ENCODE measurements at regions of chrX and their contacts with region 1.

Region 1: GRCh38 chrX:53317365-53318069 is 36.1 kb upstream of the IQSEC2 start:
- DNase-seq: peak; percentile 27
- H3K4me3 ChIP-seq: no peak overlapping the region
- H3K27ac ChIP-seq: no peak overlapping the region
- H3K4me1 ChIP-seq: peaks cover 13% of the 10 kb centered on the region
- H3K27me3 ChIP-seq: peaks cover 34% of the 10 kb centered on the region in 2 experiments
- CTCF ChIP-seq: peak; percentile 51 to 84
- POLR2A ChIP-seq: no peak

Region 2: GRCh38 chrX:53305219-53305995 is 12.1 kb before region 1 on chrX:
- CTCF ChIA-PET with region 1: interaction called, 10 read pairs
- POLR2A ChIA-PET with region 1: no interaction called
- dilution Hi-C with region 1: no loop called
- intact Hi-C with region 1: no loop called
- DNase-seq: no peak
- H3K4me3 ChIP-seq: no peak overlapping the region
- H3K27ac ChIP-seq: no peak overlapping the region
- H3K4me1 ChIP-seq: no peaks in the 10 kb centered on the region
- H3K27me3 ChIP-seq: no peaks in the 10 kb centered on the region
- CTCF ChIP-seq: no peak
- POLR2A ChIP-seq: no peak

Region 3: DNA sequence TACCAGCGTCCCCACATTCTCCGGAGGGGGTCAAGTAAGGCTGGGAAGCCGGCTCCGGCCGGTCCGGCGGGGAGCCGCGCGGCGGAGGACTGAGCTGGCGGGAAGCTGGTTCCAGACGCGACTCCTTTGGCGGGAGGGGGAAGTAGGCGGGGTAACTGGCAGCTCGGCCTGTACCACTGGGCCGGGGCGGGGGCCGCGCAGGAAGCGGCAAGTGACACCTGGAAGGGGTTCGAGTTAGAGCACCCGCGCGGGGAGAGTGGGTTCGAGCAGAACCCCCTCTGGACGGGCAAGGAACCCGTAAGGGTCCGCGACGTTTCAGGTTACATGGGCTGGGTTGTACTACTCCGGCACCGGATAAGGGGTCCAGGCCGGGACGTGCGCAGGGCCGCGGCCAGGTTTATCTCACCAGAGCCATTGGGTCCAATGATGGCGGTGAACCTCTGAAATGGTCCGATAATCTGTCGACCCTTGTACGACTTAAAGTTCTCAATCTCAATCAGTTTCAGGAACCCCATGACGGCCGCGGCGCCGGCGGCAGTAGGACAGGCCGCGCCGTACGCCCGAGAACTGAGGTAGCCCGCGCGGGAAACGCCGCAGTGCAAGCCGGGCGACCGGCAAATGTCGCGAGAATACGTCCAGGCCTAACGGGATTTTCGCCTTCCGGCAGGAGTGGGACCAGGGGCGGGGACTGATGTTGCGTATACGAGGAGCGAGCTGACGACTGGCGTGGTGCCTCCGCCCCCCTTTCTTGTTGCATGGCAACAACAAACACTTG is 104.8 kb after region 1 on chrX and contains the start of gene SMC1A:
- CTCF ChIA-PET with region 1: interaction called, 10 read pairs
- POLR2A ChIA-PET with region 1: no interaction called
- dilution Hi-C with region 1: no loop called
- intact Hi-C with region 1: no loop called
- DNase-seq: peak; percentile 96
- H3K4me3 ChIP-seq: peak within 1 kb of the TSS; percentile 66 to 81 (median 80)
- H3K27ac ChIP-seq: peak within 1 kb of the TSS; percentile 88
- H3K4me1 ChIP-seq: peaks cover 12% of the 10 kb centered on the region
- H3K27me3 ChIP-seq: no peaks in the 10 kb centered on the region
- CTCF ChIP-seq: no peak
- POLR2A ChIP-seq: peak; percentile 83
- total RNA-seq, gene SMC1A: 72.5 and 75.9 TPM in 2 replicates

Region 4: GRCh38 chrX:53441531-53442321 is 124.2 kb after region 1 on chrX:
- CTCF ChIA-PET with region 1: interaction called, 47 read pairs
- POLR2A ChIA-PET with region 1: no interaction called
- dilution Hi-C with region 1: no loop called
- intact Hi-C with region 1: loop called (anchors 1 kb)
- DNase-seq: peak; percentile 58
- H3K4me3 ChIP-seq: peak overlapping the region in 2 of 3 experiments; percentile 35 to 52
- H3K27ac ChIP-seq: no peak overlapping the region
- H3K4me1 ChIP-seq: peaks cover 7% of the 10 kb centered on the region
- H3K27me3 ChIP-seq: no peaks in the 10 kb centered on the region
- CTCF ChIP-seq: no peak
- POLR2A ChIP-seq: no peak

Region 5: GRCh38 chrX:53831662-53832635 is 514.4 kb after region 1 on chrX:
- CTCF ChIA-PET with region 1: no interaction called
- POLR2A ChIA-PET with region 1: no interaction called
- dilution Hi-C with region 1: no loop called
- intact Hi-C with region 1: loop called (anchors 5 kb)
- DNase-seq: peak; percentile 44
- H3K4me3 ChIP-seq: no peak overlapping the region
- H3K27ac ChIP-seq: no peak overlapping the region
- H3K4me1 ChIP-seq: no peaks in the 10 kb centered on the region
- H3K27me3 ChIP-seq: no peaks in the 10 kb centered on the region
- CTCF ChIP-seq: peak; percentile 17 to 26
- POLR2A ChIP-seq: no peak